ENCODE measurements at regions of chr10 and their contacts with region 1.

Region 1: DNA sequence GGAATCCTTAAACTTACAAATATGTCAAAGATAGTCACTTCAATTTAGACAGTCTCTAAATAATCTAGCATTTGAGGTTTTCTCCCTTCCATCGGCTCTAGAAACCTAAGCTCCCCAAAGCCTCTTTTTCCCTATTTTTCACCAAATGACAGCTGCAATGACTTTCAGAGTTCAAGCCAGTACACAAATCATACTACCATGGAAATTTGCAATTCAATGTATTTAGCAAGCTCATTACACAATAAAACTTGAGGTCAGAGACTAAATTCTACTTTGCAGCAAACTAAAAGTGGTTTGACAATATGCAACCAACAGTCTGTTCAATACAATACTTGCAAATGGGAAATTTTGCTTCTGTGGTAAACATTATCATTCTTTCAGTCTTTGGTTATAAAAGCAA is 80.3 kb downstream of the SKIDA1 start:
- DNase-seq: no peak
- ATAC-seq: no peak
- H3K4me3 ChIP-seq: no peak overlapping the region
- H3K4me3 Mint-ChIP-seq: no peak overlapping the region
- H3K27ac ChIP-seq: no peak overlapping the region
- H3K27ac Mint-ChIP-seq: no peak overlapping the region
- H3K4me1 ChIP-seq: no peaks in the 10 kb centered on the region
- H3K4me1 Mint-ChIP-seq: no peaks in the 10 kb centered on the region
- H3K27me3 ChIP-seq: no peaks in the 10 kb centered on the region
- H3K27me3 Mint-ChIP-seq: no peaks in the 10 kb centered on the region

Region 2: DNA sequence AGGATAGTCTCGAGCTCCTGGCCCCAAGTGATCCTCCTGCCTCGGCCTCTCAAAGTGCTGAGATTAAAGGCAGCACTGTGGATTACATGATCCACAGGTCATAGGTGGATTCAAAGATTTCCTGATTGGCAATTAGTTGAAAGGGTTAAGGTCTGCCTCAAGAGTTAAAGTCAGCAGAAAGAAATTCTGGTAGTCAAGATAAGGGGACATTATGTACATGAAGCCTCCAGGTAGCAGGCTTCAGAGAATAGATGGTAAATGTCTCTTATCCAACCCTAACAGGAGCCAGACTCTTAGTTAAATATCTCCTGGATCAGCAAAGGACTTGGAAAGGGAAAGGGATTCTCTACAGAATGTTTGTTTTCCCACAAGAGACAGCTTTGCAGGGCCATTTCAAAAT is 13.4 kb before region 1 on chr10:
- CTCF ChIA-PET with region 1: no interaction called
- POLR2A ChIA-PET with region 1: interaction called in 1 of 2 experiments, 18 read pairs
- DNase-seq: no peak
- ATAC-seq: no peak
- H3K4me3 ChIP-seq: no peak overlapping the region
- H3K4me3 Mint-ChIP-seq: no peak overlapping the region
- H3K27ac ChIP-seq: no peak overlapping the region
- H3K27ac Mint-ChIP-seq: no peak overlapping the region
- H3K4me1 ChIP-seq: no peaks in the 10 kb centered on the region
- H3K4me1 Mint-ChIP-seq: no peaks in the 10 kb centered on the region
- H3K27me3 ChIP-seq: peaks cover 0 to 4% of the 10 kb centered on the region in 2 experiments
- H3K27me3 Mint-ChIP-seq: peaks cover 6 to 8% of the 10 kb centered on the region in 2 donors